Activated T-helper 1 cell treated with anti-CD3 and anti-CD28 coated beads, Interleukin-12 subunit alpha, Interleukin-12 subunit beta, Interleukin-2, Interleukin-4 antibody, amounts not matched to agents 30 ng/mL and 10 ng/mL and 1 ng/mL, durations not matched to agents 14 hours and 24 hours and 36 hours (primary cell): ENCODE measurements at regions of chr4 and their contacts with region 1.

Region 1: GRCh38 chr4:76179398-76180318 is 31.5 kb upstream of the NUP54 start:
- DNase-seq: peak; percentile 63
- H3K4me3 Mint-ChIP-seq: no peak overlapping the region
- H3K27ac Mint-ChIP-seq: no peak overlapping the region
- H3K4me1 Mint-ChIP-seq: no peaks in the 10 kb centered on the region
- H3K27me3 Mint-ChIP-seq: no peaks in the 10 kb centered on the region

Region 2: DNA sequence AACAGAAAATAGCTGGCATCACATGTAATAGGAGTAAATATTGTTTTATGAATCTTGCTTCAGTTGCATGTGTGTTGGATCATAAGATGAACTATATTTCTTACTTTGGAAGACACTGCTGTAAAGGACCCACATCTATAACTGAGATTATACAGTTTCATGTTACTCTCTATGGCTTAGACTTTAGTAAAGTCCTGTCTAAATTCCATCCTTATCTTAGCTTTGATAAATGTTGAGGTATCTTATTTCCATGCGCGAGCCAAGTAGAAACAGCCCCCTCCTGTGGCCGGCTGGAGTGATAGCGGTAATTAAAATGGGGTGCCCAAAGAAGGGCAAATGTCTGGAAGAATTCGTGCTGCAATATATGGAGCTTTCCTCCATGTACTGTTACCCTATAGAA is 198.3 kb after region 1 on chr4:
- intact Hi-C with region 1: loop called (anchors 1 kb)
- DNase-seq: no peak
- H3K4me3 Mint-ChIP-seq: no peak overlapping the region
- H3K27ac Mint-ChIP-seq: no peak overlapping the region
- H3K4me1 Mint-ChIP-seq: no peaks in the 10 kb centered on the region
- H3K27me3 Mint-ChIP-seq: peaks cover 10% of the 10 kb centered on the region

Region 3: DNA sequence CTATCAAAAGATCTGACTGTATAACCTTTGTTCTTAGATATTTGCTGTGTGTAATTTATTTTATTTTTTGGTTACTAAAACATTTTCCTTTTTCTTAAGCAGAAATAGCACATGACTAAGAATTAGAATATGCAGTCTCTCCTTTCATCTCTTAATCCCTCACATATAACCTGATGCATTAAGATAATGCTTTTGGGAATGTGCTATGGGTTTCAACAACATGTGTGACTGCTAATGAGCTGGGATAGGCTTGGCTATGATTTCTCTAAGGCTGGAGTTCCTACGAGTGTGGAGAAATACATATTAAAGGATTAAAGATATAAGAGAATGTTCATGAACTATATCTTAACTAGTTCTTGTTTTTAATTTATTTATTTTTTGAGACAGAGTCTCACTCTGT is 296.9 kb after region 1 on chr4:
- intact Hi-C with region 1: no loop called
- DNase-seq: no peak
- H3K4me3 Mint-ChIP-seq: no peak overlapping the region
- H3K27ac Mint-ChIP-seq: no peak overlapping the region
- H3K4me1 Mint-ChIP-seq: no peaks in the 10 kb centered on the region
- H3K27me3 Mint-ChIP-seq: peaks cover 7% of the 10 kb centered on the region

Region 4: GRCh38 chr4:76504613-76505465 is 325.2 kb after region 1 on chr4:
- intact Hi-C with region 1: loop called (anchors 1 kb)
- DNase-seq: no peak
- H3K4me3 Mint-ChIP-seq: no peak overlapping the region
- H3K27ac Mint-ChIP-seq: no peak overlapping the region
- H3K4me1 Mint-ChIP-seq: no peaks in the 10 kb centered on the region
- H3K27me3 Mint-ChIP-seq: no peaks in the 10 kb centered on the region

Region 5: GRCh38 chr4:76758290-76758882 is 578.7 kb after region 1 on chr4:
- intact Hi-C with region 1: loop called (anchors 10 kb)
- DNase-seq: no peak
- H3K4me3 Mint-ChIP-seq: no peak overlapping the region
- H3K27ac Mint-ChIP-seq: no peak overlapping the region
- H3K4me1 Mint-ChIP-seq: peaks cover 12% of the 10 kb centered on the region
- H3K27me3 Mint-ChIP-seq: peaks cover 3% of the 10 kb centered on the region